ENCODE measurements at regions of chr2 and their contacts with region 1.

Region 1: DNA sequence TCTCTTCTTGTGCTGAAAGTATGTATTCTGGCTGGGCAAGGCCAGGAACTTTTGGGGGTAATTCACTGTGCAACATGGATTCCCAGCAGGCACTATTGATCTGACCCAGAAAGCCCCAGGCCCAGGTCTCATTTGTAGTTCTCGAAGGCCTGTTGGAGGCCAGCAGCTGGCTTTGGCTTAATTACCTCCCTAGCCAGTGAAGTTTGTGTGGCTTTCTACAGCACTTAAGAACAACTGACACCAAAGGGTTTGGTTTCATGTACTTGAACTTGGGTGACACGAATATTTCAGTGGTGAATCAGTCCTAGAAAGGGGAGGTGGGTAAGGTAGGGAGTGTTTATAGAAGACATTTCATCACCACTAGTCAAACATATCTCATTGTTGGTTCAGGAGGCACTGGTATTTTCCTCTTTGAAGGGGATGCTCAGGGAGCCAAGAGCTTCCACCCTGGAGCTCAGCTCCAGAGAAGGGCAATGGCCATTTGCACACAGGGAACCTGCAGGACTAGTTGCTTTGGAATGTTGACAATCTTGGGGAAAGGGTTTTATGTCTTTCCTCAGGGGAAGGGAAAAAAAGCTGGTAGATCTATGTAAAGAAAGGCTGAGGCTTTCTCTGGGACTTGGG is 217.7 kb downstream of the OSR1 start:
- DNase-seq: peak; percentile 99
- ATAC-seq: peak; percentile 94
- H3K4me3 ChIP-seq: peak overlapping the region; percentile 4; the same call in 1 of the 2 replicates
- H3K27ac ChIP-seq: peak overlapping the region; percentile 85
- H3K4me1 ChIP-seq: peaks cover 55% of the 10 kb centered on the region
- H3K27me3 ChIP-seq: no peaks in the 10 kb centered on the region
- CTCF ChIP-seq: no peak

Region 2: DNA sequence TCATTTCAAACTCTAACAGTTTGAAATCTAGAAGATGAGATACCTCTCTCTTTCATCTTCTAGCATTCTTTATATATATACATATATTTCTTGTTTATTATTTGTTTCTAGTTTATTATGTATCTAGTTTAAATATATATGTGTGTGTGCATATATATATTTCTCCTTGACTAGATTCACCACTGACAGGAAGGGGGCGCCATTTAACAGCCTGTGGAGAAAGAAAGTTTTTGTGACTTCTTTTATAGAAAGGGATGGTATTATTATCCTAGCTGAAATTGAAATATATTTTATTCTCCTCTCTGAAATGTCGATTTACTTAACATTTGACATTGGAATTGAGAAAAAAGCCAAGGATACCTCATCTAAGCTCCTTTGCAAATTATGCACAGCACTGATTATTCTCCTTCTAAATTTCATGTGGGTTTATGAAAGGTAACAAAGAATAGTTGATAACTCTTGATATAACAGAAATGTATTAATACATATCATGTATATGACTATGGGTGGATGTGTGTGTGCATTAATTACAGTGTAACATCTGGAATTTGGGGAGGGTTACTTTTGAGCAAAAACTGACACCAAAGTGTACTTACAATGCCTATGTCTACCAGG is 390.7 kb before region 1 on chr2:
- CTCF ChIA-PET with region 1: no interaction called
- POLR2A ChIA-PET with region 1: no interaction called
- intact Hi-C with region 1: loop called (anchors 5 kb)
- DNase-seq: peak; percentile 74
- ATAC-seq: no peak
- H3K4me3 ChIP-seq: no peak overlapping the region
- H3K27ac ChIP-seq: no peak overlapping the region
- H3K4me1 ChIP-seq: peaks cover 35% of the 10 kb centered on the region
- H3K27me3 ChIP-seq: no peaks in the 10 kb centered on the region
- CTCF ChIP-seq: peak; percentile 83

Region 3: GRCh38 chr2:18976168-18976961 is 164.3 kb before region 1 on chr2:
- CTCF ChIA-PET with region 1: interaction called, 3 read pairs
- POLR2A ChIA-PET with region 1: no interaction called
- intact Hi-C with region 1: loop called (anchors 5 kb)
- DNase-seq: peak; percentile 89
- ATAC-seq: peak; percentile 81
- H3K4me3 ChIP-seq: peak overlapping the region; percentile 14
- H3K27ac ChIP-seq: peak overlapping the region; percentile 64
- H3K4me1 ChIP-seq: peaks cover 30% of the 10 kb centered on the region
- H3K27me3 ChIP-seq: no peaks in the 10 kb centered on the region
- CTCF ChIP-seq: no peak

Region 4: DNA sequence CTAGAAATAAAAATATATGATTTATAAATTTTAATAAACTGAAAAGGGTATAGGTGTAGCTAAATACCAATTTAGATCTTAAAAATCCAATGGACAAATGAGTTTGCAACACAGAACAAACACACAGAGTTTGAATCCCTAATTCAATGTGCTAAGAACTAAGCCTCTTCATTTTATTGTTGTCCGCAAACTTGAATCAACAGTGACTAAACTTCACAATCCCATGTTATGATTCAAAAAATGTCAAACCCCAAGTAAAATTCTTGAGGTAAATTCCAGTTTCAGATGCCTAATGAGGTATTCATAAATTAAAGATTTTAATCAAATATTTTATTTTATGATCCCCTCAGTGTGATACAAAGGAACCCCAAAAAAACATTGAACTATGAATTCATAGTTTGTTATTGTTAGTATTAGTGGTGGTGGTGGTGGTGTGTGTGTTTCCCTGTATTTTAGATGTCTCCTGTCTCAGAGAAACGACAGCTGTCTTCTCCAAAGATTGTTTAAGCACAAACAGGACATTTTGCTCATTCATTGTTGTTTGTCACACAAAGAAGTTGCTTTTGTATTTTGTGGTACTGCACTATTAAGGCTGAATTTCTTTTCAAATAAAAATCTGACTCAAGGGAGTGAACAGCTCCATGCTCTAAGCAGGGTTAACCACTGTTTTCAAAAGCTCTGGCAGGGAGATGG is 42.1 kb before region 1 on chr2:
- CTCF ChIA-PET with region 1: no interaction called
- POLR2A ChIA-PET with region 1: no interaction called
- intact Hi-C with region 1: loop called (anchors 1 kb)
- DNase-seq: peak; percentile 78
- ATAC-seq: peak; percentile 59
- H3K4me3 ChIP-seq: no peak overlapping the region
- H3K27ac ChIP-seq: peak overlapping the region; percentile 28
- H3K4me1 ChIP-seq: peaks cover 56% of the 10 kb centered on the region
- H3K27me3 ChIP-seq: no peaks in the 10 kb centered on the region
- CTCF ChIP-seq: no peak

Region 5: GRCh38 chr2:19120941-19121750 is 19.6 kb before region 1 on chr2:
- CTCF ChIA-PET with region 1: interaction called, 3 read pairs
- POLR2A ChIA-PET with region 1: interaction called, 4 read pairs
- intact Hi-C with region 1: loop called (anchors 2 kb)
- DNase-seq: peak; percentile 96
- ATAC-seq: peak; percentile 96
- H3K4me3 ChIP-seq: no peak overlapping the region
- H3K27ac ChIP-seq: no peak overlapping the region
- H3K4me1 ChIP-seq: peaks cover 19% of the 10 kb centered on the region
- H3K27me3 ChIP-seq: no peaks in the 10 kb centered on the region
- CTCF ChIP-seq: no peak

Region 6: GRCh38 chr2:19312949-19313348 is 172.2 kb after region 1 on chr2:
- CTCF ChIA-PET with region 1: no interaction called
- POLR2A ChIA-PET with region 1: no interaction called
- intact Hi-C with region 1: loop called (anchors 5 kb)
- DNase-seq: peak; percentile 61
- ATAC-seq: peak; percentile 84
- H3K4me3 ChIP-seq: no peak overlapping the region
- H3K27ac ChIP-seq: no peak overlapping the region
- H3K4me1 ChIP-seq: no peaks in the 10 kb centered on the region
- H3K27me3 ChIP-seq: no peaks in the 10 kb centered on the region
- CTCF ChIP-seq: peak; percentile 64

Region 7: GRCh38 chr2:19347619-19348562 is 207.2 kb after region 1 on chr2:
- CTCF ChIA-PET with region 1: no interaction called
- POLR2A ChIA-PET with region 1: no interaction called
- intact Hi-C with region 1: loop called (anchors 10 kb)
- DNase-seq: peak; percentile 95
- ATAC-seq: peak; percentile 87
- H3K4me3 ChIP-seq: peak overlapping the region; percentile 73
- H3K27ac ChIP-seq: peak overlapping the region; percentile 51
- H3K4me1 ChIP-seq: peaks cover 7% of the 10 kb centered on the region
- H3K27me3 ChIP-seq: no peaks in the 10 kb centered on the region
- CTCF ChIP-seq: no peak